Upper lobe of right lung (tissue), 1 donor: ENCODE measurements at regions of chr7 and their contacts with region 1.

Region 1: DNA sequence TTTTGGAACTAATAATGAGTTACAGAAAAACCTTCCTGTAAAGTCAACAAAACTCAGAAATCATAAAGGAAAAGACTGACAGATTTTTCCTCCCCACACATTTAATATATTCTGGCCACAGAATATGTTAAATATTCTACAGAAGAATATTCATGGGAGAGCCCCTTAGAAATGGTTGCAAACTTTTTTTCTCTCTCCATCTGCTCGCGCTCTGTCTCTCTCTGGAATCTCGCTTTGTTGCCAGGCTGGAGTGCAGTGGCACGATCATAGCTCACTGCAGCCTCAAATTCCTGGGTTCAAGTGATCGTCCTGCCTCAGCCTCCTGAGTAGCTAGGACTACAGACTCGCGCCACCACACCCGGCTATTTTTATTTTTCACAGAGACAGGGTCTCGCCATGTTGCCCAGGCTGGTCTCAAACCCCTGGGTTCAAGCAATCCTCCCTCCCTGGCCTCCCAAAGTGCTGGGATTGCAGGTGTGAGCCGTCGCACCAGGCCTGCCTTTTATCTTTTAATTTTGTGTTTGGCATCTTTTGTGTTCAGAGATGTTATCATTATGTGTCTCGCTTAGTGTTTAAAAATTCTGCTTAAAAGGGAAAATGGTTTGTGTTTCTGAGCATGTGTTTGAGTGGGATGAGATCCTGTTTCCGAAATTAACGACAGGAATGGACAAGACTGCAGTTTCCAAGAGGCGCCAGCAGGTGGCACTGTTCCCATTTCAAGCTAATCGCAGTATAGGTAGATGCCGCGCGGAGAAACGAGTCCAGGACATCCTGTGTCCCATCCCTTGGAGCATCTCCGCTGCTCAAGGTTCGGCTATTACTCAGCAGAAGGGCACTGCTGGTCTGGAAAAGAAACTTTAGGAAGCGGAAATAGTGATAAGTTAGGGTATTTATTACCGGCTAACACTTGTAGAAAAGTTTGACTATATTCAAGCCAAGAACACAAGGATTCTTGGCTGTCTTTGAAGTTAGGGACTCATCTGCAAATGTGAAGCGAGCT is 23.1 kb upstream of the ST7 start:
- DNase-seq: peak; percentile 87
- ATAC-seq: peak; percentile 97
- H3K4me3 ChIP-seq: no peak overlapping the region
- H3K27ac ChIP-seq: no peak overlapping the region
- H3K4me1 ChIP-seq: peaks cover 2% of the 10 kb centered on the region
- H3K27me3 ChIP-seq: no peaks in the 10 kb centered on the region
- CTCF ChIP-seq: peak; percentile 95

Region 2: GRCh38 chr7:117127585-117128168 is 197.5 kb after region 1 on chr7:
- intact Hi-C with region 1: loop called (anchors 10 kb)
- DNase-seq: no peak
- ATAC-seq: peak; percentile 72
- H3K4me3 ChIP-seq: no peak overlapping the region
- H3K27ac ChIP-seq: no peak overlapping the region
- H3K4me1 ChIP-seq: peaks cover 9% of the 10 kb centered on the region
- H3K27me3 ChIP-seq: no peaks in the 10 kb centered on the region
- CTCF ChIP-seq: peak; percentile 79